ENCODE measurements at regions of chr16 and their contacts with region 1.

Region 1: DNA sequence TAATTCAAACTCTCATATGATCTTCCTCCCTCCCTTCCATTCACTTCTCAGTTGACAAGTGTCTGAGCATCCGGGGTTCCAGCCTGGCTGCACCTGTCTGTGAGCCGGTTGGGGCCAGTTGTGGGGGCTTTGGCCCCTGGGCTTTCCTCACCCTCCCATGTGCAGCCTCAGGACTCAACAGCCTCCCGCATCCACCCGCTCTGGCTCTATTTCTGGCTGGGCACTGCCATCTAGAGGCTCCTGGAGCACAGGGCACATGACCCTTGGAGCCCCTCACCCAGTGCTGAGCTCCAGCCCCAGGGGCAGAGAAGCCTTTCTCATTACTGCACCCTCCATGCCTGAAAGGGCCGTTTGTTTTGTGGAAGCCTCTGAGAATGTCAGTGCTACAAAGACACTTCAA is 43.3 kb downstream of the HAPSTR1 start:
- DNase-seq: no peak
- ATAC-seq: peak; percentile 83
- H3K4me3 ChIP-seq: no peak overlapping the region
- H3K27ac ChIP-seq: no peak overlapping the region
- H3K4me1 ChIP-seq: peaks cover 34% of the 10 kb centered on the region
- H3K27me3 ChIP-seq: no peaks in the 10 kb centered on the region
- CTCF ChIP-seq: peak; percentile 82 to 92 (median 84)
- EP300 ChIP-seq: no peak
- POLR2A ChIP-seq: no peak
- RAD21 ChIP-seq: peak; percentile 93

Region 2: DNA sequence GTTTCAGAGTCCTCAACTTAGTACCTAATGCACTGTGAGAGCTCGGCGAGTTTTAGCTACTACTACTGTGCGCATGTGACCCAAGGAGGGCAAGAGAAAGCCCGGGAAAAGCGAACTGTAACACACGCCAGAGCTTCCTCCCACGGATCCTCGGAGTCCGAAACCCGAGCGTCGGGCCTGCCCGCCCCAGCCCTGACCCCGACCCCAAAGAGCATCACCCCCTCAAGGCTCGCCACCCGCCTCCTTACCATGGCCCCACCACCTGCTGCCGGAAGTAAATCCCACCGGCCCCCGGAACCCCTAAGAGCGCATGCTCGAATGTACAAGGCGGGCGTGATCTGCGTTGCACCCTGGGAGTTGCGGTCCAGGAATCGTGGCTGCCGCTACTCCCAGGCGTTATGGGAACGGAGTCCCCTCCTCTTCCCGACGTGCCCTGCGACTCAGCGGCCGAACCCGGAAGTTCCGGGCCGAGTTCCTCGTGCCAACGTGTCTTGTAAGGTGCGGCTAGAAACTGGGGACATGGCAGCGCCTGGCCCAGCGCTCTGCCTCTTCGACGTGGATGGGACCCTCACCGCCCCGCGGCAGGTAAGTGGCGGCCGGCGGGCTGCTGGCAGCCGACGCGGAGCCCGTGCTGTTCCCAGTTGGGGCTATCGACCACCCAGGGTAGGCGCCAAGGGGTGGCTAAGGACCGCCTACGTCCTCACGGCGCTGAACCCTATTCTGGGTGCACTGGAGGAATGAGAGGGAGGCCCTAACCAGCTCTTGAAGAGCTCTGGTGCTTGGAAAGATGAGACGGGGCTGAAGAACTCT is 337.2 kb before region 1 on chr16 and contains the starts of genes PMM2 and TMEM186:
- CTCF ChIA-PET with region 1: interaction called, 4 read pairs
- POLR2A ChIA-PET with region 1: no interaction called
- RAD21 ChIA-PET with region 1: no interaction called
- SMC1A ChIA-PET with region 1: no interaction called
- in situ Hi-C with region 1: no loop called
- intact Hi-C with region 1: loop called (anchors 5 kb)
- DNase-seq: peak; percentile 92
- ATAC-seq: peak; percentile 95
- H3K4me3 ChIP-seq: peak within 1 kb of the TSS; percentile 96
- H3K27ac ChIP-seq: peak within 1 kb of the TSS; percentile 84
- H3K4me1 ChIP-seq: peaks cover 10% of the 10 kb centered on the region
- H3K27me3 ChIP-seq: no peaks in the 10 kb centered on the region
- CTCF ChIP-seq: no peak
- EP300 ChIP-seq: no peak
- POLR2A ChIP-seq: peak; percentile 99
- RAD21 ChIP-seq: no peak
- polyA plus RNA-seq, gene PMM2: 22.6 to 24.2 TPM
- polyA plus RNA-seq, gene TMEM186: 27.3 to 28.9 TPM

Region 3: DNA sequence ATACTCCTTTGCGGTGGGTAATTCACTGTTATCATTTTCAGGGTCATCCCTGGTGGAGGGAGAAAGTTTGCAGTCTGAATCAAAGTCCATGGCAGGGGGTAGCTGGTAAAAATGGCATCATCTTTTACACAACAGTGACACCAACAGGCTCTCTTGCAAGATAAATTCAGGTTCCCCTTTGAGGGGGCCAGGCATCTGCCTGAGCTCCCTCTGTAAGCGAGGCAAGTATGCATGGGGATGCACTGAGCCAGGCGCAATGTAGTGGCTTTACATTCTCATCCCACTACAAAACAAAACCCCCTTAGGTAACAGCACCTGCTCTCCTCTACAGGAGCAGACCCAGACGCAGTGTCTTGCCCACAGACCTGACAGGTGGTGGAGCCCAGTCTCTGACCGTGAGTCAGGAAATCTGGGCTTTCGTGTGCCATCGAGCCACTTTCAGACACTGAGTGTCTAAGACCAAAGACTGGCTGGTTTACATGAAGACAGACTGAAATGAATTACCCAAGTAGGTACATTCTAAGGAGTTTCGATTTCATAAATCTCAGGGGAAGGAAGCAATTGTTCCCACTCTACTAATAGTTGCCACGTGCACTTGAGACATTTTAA is 234.9 kb before region 1 on chr16:
- CTCF ChIA-PET with region 1: interaction called, 6 read pairs
- POLR2A ChIA-PET with region 1: no interaction called
- RAD21 ChIA-PET with region 1: interaction called, 6 read pairs
- SMC1A ChIA-PET with region 1: interaction called, 13 read pairs
- in situ Hi-C with region 1: loop called (anchors 5 kb)
- intact Hi-C with region 1: no loop called
- DNase-seq: no peak
- ATAC-seq: peak; percentile 90
- H3K4me3 ChIP-seq: no peak overlapping the region
- H3K27ac ChIP-seq: peak overlapping the region; percentile 18; the same call in 1 of the 2 replicates
- H3K4me1 ChIP-seq: peaks cover 5% of the 10 kb centered on the region
- H3K27me3 ChIP-seq: no peaks in the 10 kb centered on the region
- CTCF ChIP-seq: peak in 1 of 3 experiments; percentile 31; a peak in 1 of 6 replicates
- EP300 ChIP-seq: no peak
- POLR2A ChIP-seq: no peak
- RAD21 ChIP-seq: no peak

Region 4: GRCh38 chr16:9008601-9009260 is 126.0 kb before region 1 on chr16:
- CTCF ChIA-PET with region 1: interaction called, 30 read pairs
- POLR2A ChIA-PET with region 1: interaction called, 5 read pairs
- RAD21 ChIA-PET with region 1: interaction called, 23 read pairs
- SMC1A ChIA-PET with region 1: interaction called, 18 read pairs
- in situ Hi-C with region 1: no loop called
- intact Hi-C with region 1: loop called (anchors 2 kb)
- DNase-seq: peak; percentile 21
- ATAC-seq: peak; percentile 100
- H3K4me3 ChIP-seq: no peak overlapping the region; the same call in 1 of the 2 replicates
- H3K27ac ChIP-seq: no peak overlapping the region
- H3K4me1 ChIP-seq: peaks cover 6% of the 10 kb centered on the region
- H3K27me3 ChIP-seq: no peaks in the 10 kb centered on the region
- CTCF ChIP-seq: peak; percentile 83 to 97 (median 89)
- EP300 ChIP-seq: no peak
- POLR2A ChIP-seq: no peak
- RAD21 ChIP-seq: peak; percentile 89

Region 5: DNA sequence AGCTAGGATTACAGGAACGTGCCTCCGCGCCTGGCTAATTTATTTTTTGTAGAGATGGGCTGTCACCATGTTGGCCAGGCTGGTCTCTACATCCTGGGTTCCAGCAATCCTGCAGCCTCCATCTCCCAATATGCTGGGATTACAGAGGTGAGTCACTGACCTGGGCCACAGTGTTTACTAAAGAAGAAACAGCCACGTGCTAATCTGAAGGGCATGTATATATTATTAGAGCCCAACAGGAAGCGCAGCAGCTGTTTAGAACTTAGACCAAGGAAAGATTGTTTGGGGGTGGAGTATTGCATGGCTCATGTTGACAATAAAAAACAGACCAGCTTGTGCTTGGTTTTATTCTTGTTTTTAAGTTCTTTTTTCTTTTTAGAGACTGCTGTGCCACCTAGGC is 16.9 kb after region 1 on chr16:
- CTCF ChIA-PET with region 1: interaction called, 30 read pairs
- POLR2A ChIA-PET with region 1: no interaction called
- RAD21 ChIA-PET with region 1: no interaction called
- SMC1A ChIA-PET with region 1: no interaction called
- in situ Hi-C with region 1: no loop called
- intact Hi-C with region 1: no loop called
- DNase-seq: no peak
- ATAC-seq: no peak
- H3K4me3 ChIP-seq: no peak overlapping the region
- H3K27ac ChIP-seq: no peak overlapping the region
- H3K4me1 ChIP-seq: no peaks in the 10 kb centered on the region
- H3K27me3 ChIP-seq: no peaks in the 10 kb centered on the region
- CTCF ChIP-seq: no peak
- EP300 ChIP-seq: no peak
- POLR2A ChIP-seq: no peak
- RAD21 ChIP-seq: no peak

Region 6: DNA sequence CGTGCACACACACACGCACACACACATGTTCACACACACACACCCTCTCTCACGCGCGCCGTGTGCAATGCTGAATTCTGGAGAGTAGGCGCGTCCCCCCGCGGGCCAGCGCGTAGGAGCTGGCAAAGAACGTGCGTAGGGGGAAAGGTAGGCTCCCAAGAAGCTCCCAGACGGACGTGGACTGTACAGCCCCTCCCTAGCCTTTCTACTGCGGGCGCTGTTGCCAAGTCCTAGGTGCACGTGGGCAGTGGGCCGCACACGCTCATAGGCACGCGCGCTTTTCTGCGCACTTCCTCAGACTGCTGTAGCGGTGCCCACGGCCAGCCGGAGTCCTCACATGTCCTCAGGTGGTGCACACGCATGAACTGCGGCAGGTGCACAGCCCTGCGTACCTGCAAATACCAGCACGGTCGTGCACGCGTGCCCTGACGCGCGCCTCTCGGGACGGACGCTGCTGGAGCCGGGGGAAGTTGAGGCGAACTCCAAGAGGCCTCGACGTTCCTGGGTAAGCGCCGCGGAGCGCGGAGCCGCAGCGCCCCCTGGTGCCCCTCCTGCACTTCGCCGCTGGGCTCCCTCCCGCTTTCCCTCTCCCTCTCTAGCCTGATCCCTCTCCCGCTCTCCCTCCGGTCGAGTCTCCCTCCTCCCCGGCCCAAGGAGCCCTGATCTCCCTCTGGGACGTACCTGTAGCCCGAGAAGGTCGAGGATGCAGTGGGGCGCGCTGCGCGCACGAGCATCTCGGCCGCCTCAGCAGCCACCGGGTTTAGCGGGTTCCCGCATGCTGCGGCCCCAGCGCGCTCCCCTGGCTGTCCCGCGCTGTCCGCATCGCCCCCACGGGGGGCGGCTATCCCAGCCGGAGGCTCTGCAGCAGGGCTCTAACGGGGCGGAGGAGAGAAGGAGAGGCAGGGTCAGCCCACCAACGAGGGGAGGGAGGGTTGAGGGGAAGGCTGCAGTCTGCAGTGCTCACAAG is 1046.7 kb after region 1 on chr16:
- CTCF ChIA-PET with region 1: interaction called, 14 read pairs
- POLR2A ChIA-PET with region 1: interaction called, 3 read pairs
- RAD21 ChIA-PET with region 1: interaction called, 7 read pairs
- SMC1A ChIA-PET with region 1: interaction called, 4 read pairs
- in situ Hi-C with region 1: no loop called
- intact Hi-C with region 1: no loop called
- DNase-seq: no peak
- ATAC-seq: peak; percentile 83
- H3K4me3 ChIP-seq: peak overlapping the region; percentile 55; the same call in 1 of the 2 replicates
- H3K27ac ChIP-seq: no peak overlapping the region
- H3K4me1 ChIP-seq: peaks cover 3% of the 10 kb centered on the region; the same call in 1 of the 2 replicates
- H3K27me3 ChIP-seq: peaks cover 3 to 6% of the 10 kb centered on the region in 2 experiments; a peak in 3 of 4 replicates
- CTCF ChIP-seq: peak; percentile 76 to 97 (median 91)
- EP300 ChIP-seq: no peak
- POLR2A ChIP-seq: no peak
- RAD21 ChIP-seq: peak; percentile 82

Measured in GM12878 (cell line).